WTC11 (cell line): ENCODE measurements at regions of chr14 and their contacts with region 1.

Region 1: DNA sequence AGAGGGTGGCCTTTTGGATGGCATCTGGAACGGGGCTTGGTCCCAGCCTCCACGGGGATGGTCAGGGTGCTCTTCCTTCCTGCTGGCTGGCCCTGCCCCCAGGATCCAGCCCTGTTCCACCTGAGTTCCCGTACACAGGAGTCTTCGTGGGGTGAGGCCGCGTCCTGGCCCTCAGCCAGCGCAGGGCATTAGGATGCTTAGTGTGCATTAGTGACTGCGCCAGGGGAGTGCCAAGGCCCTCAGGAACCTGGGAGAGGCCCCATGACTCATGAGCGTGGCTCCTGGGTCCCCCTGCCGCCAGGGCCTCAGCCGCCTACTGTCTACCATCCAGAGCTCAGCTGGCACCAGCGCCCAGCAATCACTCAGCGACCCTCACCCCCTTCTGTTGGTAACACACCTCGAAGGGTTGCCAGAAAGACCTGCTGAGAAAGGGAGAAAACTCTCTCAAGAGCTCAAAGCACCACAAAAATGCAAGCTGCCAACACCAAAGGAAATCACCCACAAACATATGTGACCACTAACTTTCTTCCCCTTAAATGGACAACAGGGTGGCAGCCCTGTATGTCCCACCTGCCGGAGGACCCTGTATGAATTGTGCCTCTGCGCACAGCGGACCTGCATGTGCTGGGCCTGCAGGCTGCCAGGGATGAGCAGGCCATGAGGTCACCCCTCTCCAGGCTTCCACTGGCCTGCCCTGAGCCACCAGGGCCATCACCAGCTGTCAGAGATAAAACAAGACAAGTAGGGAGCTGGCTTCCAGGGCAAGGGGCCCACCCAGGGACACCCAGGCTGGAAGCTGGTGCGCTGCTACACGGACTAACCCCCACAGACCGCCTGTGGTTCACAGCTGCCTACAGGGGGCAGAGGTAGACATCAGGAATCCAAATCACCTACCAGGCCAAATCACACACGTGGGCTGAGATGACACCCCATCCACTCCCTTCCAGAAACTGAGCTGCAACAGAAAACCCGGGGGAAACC is 28.7 kb downstream of the CCDC85C start:
- DNase-seq: no peak
- ATAC-seq: no peak
- H3K4me3 Mint-ChIP-seq: no peak overlapping the region
- H3K27ac Mint-ChIP-seq: peak overlapping the region; percentile 79; the same call in 1 of the 2 replicates
- H3K4me1 Mint-ChIP-seq: peaks cover 75% of the 10 kb centered on the region
- H3K27me3 Mint-ChIP-seq: peaks cover 8% of the 10 kb centered on the region; the same call in 1 of the 2 replicates
- CTCF ChIP-seq: no peak

Region 2: GRCh38 chr14:99595034-99595433 is 19.7 kb after region 1 on chr14:
- CTCF ChIA-PET with region 1: interaction called, 19 read pairs
- POLR2A ChIA-PET with region 1: interaction called, 5 read pairs
- DNase-seq: no peak
- ATAC-seq: no peak
- H3K4me3 Mint-ChIP-seq: no peak overlapping the region
- H3K27ac Mint-ChIP-seq: peak overlapping the region; percentile 82; the same call in 1 of the 2 replicates
- H3K4me1 Mint-ChIP-seq: peaks cover 31% of the 10 kb centered on the region
- H3K27me3 Mint-ChIP-seq: no peaks in the 10 kb centered on the region
- CTCF ChIP-seq: no peak

Region 3: DNA sequence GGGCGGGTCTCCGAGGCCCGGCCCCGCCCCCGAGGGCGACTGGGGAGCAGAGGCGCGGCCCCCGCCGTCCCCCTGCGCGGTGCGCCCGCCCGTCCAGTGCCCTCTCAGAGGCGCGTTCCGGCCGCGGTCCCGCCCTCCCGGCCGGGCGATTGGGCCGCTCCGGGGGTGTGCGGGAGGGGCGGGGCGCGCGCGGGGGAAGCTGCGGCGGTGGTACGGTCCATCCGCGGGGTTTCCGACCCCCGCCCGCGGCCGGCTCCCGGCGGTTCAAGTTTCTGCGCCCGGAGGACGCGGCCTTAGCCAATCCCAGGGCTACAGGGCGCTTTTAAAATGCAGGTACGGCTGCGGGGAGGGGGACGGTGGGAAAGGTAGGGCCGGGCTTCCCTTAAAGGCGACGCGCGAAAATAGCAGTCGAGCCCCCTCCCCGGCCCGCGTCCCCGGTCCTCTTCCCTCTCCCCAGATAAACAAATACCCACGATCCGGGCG is 29.0 kb after region 1 on chr14:
- CTCF ChIA-PET with region 1: interaction called, 31 read pairs
- POLR2A ChIA-PET with region 1: interaction called, 6 read pairs
- DNase-seq: peak; percentile 95
- ATAC-seq: peak; percentile 92
- H3K4me3 Mint-ChIP-seq: peak overlapping the region; percentile 85
- H3K27ac Mint-ChIP-seq: no peak overlapping the region
- H3K4me1 Mint-ChIP-seq: peaks cover 29% of the 10 kb centered on the region
- H3K27me3 Mint-ChIP-seq: peaks cover 34% of the 10 kb centered on the region
- CTCF ChIP-seq: no peak

Region 4: GRCh38 chr14:99636487-99636886 is 61.2 kb after region 1 on chr14:
- CTCF ChIA-PET with region 1: no interaction called
- POLR2A ChIA-PET with region 1: no interaction called
- DNase-seq: no peak
- ATAC-seq: no peak
- H3K4me3 Mint-ChIP-seq: no peak overlapping the region
- H3K27ac Mint-ChIP-seq: no peak overlapping the region
- H3K4me1 Mint-ChIP-seq: no peaks in the 10 kb centered on the region
- H3K27me3 Mint-ChIP-seq: no peaks in the 10 kb centered on the region
- CTCF ChIP-seq: no peak